RWPE1 (cell line): ENCODE measurements at regions of chr9 and their contacts with region 1.

Region 1: DNA sequence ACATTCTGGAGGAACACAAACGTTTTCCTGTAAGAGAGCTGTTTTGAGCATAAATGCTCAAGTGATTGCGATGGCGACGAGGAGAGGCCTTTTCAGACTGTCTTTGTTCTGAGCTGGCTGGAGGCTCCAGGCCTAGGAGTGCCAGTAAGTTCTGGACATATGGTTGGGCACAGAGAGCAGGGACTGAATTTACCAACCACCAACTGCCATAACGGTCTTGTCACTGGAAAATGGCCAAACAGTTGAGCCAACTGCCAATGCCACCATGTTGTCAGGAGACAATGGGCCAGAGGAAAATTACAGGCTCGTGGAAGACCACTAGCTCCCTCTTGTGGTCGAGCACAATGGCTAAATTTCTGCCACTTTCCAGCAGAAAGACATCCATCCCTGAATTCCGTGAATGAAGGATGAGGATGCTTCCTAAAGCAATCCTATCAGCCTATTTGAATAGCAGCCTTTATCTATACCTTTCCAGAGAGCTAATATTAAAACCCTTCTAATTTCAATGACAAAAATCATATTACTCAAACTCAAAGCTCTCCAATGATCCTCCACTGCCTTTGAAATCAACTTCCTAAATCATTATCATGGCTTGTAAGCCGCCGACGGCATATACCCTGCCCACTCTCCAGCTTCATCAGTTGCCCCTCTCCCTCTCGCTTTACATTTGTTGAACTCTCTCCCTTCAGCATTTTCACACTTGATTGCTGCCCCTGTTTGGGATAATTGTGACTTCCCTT is 66.9 kb upstream of the GLIS3 start:
- DNase-seq: peak; percentile 6
- H3K27ac ChIP-seq: no peak overlapping the region
- CTCF ChIP-seq: peak; percentile 67

Region 2: DNA sequence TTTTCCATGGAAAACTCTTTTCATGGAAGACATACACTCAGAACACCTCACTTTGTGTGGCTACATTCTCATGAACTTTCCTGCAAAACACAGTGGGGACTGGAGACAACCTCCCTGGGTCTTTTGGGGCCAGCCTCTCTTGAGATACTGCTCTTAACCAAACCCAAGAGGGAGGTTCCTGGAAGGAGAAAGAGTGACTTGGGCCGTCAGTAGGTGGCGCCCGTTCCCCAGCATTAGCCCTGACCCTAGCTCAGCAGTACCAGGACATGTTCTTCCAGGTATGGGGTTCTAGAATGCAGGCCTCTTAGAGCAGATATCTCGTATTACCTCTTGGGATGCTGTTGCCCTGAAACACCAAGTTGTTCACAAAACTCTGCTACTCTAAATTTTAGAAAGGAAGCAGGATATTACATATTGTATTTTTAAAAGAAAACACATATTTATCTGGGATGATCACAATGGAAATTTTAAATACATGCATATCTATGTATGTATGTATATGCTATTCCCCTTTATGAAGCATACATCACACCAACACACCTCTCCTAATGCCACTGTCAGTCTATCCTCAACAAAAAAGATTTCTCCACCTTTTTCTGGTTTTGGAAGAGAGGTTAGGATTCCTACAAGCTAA is 51.1 kb before region 1 on chr9:
- CTCF ChIA-PET with region 1: interaction called, 32 read pairs
- POLR2A ChIA-PET with region 1: no interaction called
- DNase-seq: peak; percentile 46
- H3K27ac ChIP-seq: no peak overlapping the region
- CTCF ChIP-seq: peak; percentile 91

Region 3: DNA sequence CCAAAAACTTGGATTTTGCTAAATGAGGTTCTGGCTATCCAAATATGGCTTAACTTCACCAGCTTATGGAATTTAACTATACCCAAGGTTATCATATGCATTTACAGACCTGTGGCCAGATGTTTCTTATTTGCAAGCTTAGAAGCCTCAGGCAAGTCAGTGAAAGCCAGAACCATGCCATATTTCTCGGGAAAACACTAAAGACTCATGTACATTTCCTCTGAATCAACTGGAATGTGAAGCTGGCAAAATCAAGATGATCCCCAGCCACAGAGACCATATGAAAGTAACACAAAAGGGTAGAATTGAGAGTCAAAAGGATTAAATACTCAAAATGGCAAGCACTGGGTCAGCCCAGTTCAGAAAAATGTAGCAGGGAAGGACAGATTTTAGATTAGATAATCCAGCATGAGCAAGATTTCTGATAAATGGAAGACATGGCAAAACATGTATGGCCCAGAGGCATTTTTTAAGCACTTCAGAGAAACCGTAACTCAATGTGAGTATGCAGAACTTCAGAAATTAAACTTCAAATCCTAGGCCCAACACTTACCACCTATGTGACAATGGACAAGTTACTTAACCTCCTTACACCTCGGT is 47.2 kb after region 1 on chr9:
- CTCF ChIA-PET with region 1: no interaction called
- POLR2A ChIA-PET with region 1: no interaction called
- DNase-seq: no peak
- H3K27ac ChIP-seq: no peak overlapping the region
- CTCF ChIP-seq: no peak